ENCODE measurements at regions of chr10 and their contacts with region 1.

Region 1: GRCh38 chr10:67779465-67780203 is 58.4 kb downstream of the DNAJC12 start:
- DNase-seq: peak; percentile 67
- H3K27ac ChIP-seq: no peak overlapping the region
- CTCF ChIP-seq: peak; percentile 78

Region 2: DNA sequence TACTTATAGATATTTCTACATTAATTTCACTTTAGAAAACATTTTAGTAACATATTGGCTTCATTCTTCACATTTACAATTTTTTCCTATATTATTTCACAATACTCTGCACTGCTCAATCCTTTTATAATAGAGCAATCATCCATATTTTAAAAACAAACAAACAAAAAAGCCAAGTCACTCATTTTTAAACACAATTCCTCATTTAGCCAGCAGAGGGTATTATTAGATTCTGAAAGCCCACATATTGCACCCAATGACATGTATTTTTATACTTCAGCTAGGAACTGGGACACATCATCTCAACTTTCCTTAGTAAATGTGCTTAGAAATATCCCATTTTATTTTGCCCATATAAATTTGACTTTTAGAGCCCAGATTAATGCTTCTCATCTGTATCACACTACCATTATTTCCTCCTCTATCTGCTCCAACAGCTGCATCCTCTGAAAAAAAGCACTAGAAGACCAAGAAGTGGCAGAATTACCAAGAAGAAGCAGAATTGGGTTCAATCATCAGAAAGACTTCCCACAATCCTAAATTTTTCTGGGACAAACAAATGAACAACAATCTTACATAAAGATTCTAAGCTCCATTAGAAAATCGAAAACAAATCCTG is 113.1 kb before region 1 on chr10:
- CTCF ChIA-PET with region 1: interaction called, 15 read pairs
- POLR2A ChIA-PET with region 1: no interaction called
- DNase-seq: peak; percentile 26
- H3K27ac ChIP-seq: no peak overlapping the region
- CTCF ChIP-seq: peak; percentile 44; the same call in 1 of the 2 replicates

Region 3: GRCh38 chr10:67697724-67698131 is 81.9 kb before region 1 on chr10:
- CTCF ChIA-PET with region 1: interaction called, 92 read pairs
- POLR2A ChIA-PET with region 1: no interaction called
- DNase-seq: peak; percentile 59
- H3K27ac ChIP-seq: no peak overlapping the region
- CTCF ChIP-seq: peak; percentile 64

Region 4: DNA sequence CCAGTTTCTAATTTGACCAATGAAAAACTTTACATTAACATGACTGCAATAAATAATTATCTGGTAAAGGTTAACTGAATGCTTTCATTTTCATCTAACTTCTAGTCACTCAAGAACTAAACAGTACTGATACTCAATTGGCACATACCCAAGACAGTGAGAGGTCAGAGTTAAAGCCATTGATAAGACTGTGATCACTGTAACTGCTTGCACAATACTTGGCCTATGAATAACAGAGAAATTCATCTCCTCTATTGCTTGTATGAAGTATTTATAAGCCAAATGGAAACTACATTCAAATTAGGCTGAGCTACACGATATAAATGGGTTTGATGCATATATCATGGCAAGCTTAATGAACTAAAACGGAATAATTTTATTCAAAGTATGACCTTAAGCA is 252.5 kb after region 1 on chr10:
- CTCF ChIA-PET with region 1: no interaction called
- POLR2A ChIA-PET with region 1: no interaction called
- DNase-seq: no peak
- H3K27ac ChIP-seq: no peak overlapping the region
- CTCF ChIP-seq: no peak